ENCODE measurements at regions of chr17 and their contacts with region 1.

Region 1: GRCh38 chr17:21098934-21099689 is 27.7 kb upstream of the DHRS7B start:
- DNase-seq: peak; percentile 91
- H3K4me3 Mint-ChIP-seq: peak overlapping the region; percentile 90
- H3K27ac Mint-ChIP-seq: peak overlapping the region; percentile 89
- H3K4me1 Mint-ChIP-seq: no peaks in the 10 kb centered on the region
- H3K27me3 Mint-ChIP-seq: no peaks in the 10 kb centered on the region

Region 2: GRCh38 chr17:20800146-20800545 is 299.0 kb before region 1 on chr17:
- CTCF ChIA-PET with region 1: no interaction called
- intact Hi-C with region 1: loop called (anchors 2 kb)
- DNase-seq: no peak
- H3K4me3 Mint-ChIP-seq: no peak overlapping the region
- H3K27ac Mint-ChIP-seq: no peak overlapping the region
- H3K4me1 Mint-ChIP-seq: peaks cover 2% of the 10 kb centered on the region
- H3K27me3 Mint-ChIP-seq: peaks cover 4% of the 10 kb centered on the region

Region 3: DNA sequence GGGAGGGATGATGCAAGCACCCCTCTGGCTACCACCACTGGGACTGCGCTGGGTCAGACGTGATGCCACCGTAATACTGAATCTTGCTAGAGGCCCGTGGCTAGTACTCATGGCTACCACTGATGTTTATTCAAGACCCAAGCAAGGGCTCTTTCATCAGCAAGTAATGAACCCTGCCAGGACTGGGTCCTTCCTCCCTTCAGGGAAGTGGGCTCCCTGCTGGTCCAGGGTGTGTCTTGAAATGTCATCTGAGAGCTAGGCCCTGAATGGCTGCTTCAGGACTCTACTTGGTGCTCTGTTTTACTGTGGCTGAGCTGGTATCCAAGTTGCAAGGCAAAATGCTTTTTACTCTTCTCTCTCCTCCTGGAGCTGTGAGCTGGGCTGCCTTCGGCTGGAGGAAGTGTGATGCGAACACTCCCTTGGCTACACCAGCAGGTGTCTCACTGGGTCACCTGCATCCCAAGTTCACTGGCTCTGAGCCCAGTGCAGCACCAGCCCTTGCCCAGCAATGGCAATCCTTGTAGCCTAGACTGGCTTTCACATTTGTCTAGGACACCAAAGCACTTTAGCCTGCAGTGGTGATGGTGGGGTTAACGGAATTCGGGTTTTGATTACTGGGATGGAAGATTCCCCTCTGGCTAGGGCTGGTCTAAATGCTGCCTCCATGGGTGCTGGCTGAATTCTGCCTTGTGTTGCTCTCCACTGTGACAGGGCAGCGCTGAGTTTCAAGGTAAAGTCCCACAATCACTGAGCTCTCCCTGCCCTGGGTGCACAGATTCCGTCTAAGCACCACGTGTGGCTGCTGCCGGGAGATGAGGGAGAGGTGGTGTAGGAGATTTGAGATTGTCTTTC is 154.9 kb before region 1 on chr17:
- CTCF ChIA-PET with region 1: no interaction called
- intact Hi-C with region 1: loop called (anchors 1 kb)
- DNase-seq: peak; percentile 61
- H3K4me3 Mint-ChIP-seq: no peak overlapping the region
- H3K27ac Mint-ChIP-seq: no peak overlapping the region
- H3K4me1 Mint-ChIP-seq: peaks cover 4% of the 10 kb centered on the region
- H3K27me3 Mint-ChIP-seq: no peaks in the 10 kb centered on the region

Region 4: GRCh38 chr17:21214015-21214776 is 115.1 kb after region 1 on chr17 and contains the start of gene TMEM11:
- CTCF ChIA-PET with region 1: no interaction called
- intact Hi-C with region 1: loop called (anchors 1 kb)
- DNase-seq: peak; percentile 95
- H3K4me3 Mint-ChIP-seq: peak within 1 kb of the TSS; percentile 91
- H3K27ac Mint-ChIP-seq: peak within 1 kb of the TSS; percentile 91
- H3K4me1 Mint-ChIP-seq: peaks cover 65% of the 10 kb centered on the region
- H3K27me3 Mint-ChIP-seq: no peaks in the 10 kb centered on the region
- total RNA-seq, gene TMEM11: 23.6 to 28.2 TPM

Region 5: GRCh38 chr17:21318439-21318838 is 219.3 kb after region 1 on chr17:
- CTCF ChIA-PET with region 1: interaction called, 3 read pairs
- intact Hi-C with region 1: loop called (anchors 1 kb)
- DNase-seq: no peak
- H3K4me3 Mint-ChIP-seq: no peak overlapping the region
- H3K27ac Mint-ChIP-seq: no peak overlapping the region
- H3K4me1 Mint-ChIP-seq: peaks cover 7% of the 10 kb centered on the region
- H3K27me3 Mint-ChIP-seq: no peaks in the 10 kb centered on the region